ENCODE measurements at regions of chr16 and their contacts with region 1.

Region 1: GRCh38 chr16:69463876-69464275 is 39.5 kb downstream of the CYB5B start:
- DNase-seq: no peak

Region 2: GRCh38 chr16:69330286-69331109 is 133.4 kb before region 1 on chr16 and contains the start of gene PDF:
- in situ Hi-C with region 1: no loop called
- DNase-seq: peak; percentile 94
- total RNA-seq, gene PDF: 21.5 and 26.7 TPM in 2 replicates

Region 3: DNA sequence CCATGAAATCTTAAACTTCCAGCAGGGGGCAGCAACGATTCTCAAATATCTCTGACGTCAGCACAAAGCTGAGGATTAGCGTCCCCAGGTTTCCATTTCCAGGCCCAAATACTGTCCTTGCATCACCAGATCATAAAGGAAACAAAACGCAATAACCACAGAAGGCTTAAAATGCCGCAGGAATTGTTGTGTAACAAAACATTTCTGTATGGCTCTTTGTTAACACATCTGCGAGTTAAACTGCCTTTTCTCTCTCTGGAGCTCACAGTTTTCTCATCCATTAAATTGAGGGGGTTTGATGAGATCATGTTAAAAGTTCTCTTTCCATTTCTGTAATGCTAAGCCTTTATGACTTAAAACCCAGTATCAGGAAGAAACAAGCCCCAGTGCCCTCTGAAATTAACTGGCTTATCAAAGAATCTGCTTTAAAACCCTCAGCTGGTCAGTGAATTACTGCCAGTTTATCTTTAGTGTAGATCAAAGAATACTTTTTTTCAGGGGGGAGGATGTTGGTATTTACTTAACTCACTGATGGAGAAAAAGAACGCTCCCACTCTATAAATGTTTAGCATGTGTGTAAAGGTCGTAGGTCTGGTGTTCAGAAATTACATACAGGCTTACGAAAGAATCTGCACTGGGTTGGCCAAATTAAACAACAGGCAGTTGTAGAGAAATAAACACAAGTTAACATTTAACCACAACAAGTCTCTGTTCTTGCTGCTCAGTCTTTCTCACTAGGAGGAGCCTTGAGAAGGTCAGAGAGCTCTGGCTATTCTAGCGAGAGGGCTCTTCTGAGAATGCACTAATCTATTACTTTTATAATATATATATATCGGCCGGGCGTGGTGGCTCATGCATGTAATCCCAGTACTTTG is 67.5 kb before region 1 on chr16:
- in situ Hi-C with region 1: loop called (anchors 5 kb)
- DNase-seq: peak; percentile 96

Measured in Caki2 (cell line).